B cell (primary cell): ENCODE measurements at regions of chr3 and their contacts with region 1.

Region 1: GRCh38 chr3:196609343-196609775 is 30.1 kb upstream of the NRROS start:
- DNase-seq: peak; percentile 93
- ATAC-seq: peak; percentile 92
- H3K4me3 ChIP-seq: peak overlapping the region in 2 of 5 experiments; percentile 5 to 11
- H3K4me3 Mint-ChIP-seq: peak overlapping the region; percentile 70
- H3K27ac ChIP-seq: peak overlapping the region in 1 of 2 donors; percentile 15
- H3K27ac Mint-ChIP-seq: peak overlapping the region; percentile 86
- H3K4me1 ChIP-seq: peaks cover 8 to 12% of the 10 kb centered on the region in 2 donors
- H3K4me1 Mint-ChIP-seq: peaks cover 15% of the 10 kb centered on the region
- H3K27me3 ChIP-seq: no peaks in the 10 kb centered on the region
- H3K27me3 Mint-ChIP-seq: no peaks in the 10 kb centered on the region
- CTCF ChIP-seq: peak; percentile 92

Region 2: GRCh38 chr3:196585044-196585757 is 24.2 kb before region 1 on chr3:
- CTCF ChIA-PET with region 1: interaction called, 11 read pairs
- POLR2A ChIA-PET with region 1: no interaction called
- intact Hi-C with region 1: no loop called
- DNase-seq: no peak
- ATAC-seq: no peak
- H3K4me3 ChIP-seq: no peak overlapping the region
- H3K4me3 Mint-ChIP-seq: no peak overlapping the region
- H3K27ac ChIP-seq: no peak overlapping the region
- H3K27ac Mint-ChIP-seq: no peak overlapping the region
- H3K4me1 ChIP-seq: no peaks in the 10 kb centered on the region
- H3K4me1 Mint-ChIP-seq: no peaks in the 10 kb centered on the region
- H3K27me3 ChIP-seq: no peaks in the 10 kb centered on the region
- H3K27me3 Mint-ChIP-seq: no peaks in the 10 kb centered on the region
- CTCF ChIP-seq: no peak

Region 3: DNA sequence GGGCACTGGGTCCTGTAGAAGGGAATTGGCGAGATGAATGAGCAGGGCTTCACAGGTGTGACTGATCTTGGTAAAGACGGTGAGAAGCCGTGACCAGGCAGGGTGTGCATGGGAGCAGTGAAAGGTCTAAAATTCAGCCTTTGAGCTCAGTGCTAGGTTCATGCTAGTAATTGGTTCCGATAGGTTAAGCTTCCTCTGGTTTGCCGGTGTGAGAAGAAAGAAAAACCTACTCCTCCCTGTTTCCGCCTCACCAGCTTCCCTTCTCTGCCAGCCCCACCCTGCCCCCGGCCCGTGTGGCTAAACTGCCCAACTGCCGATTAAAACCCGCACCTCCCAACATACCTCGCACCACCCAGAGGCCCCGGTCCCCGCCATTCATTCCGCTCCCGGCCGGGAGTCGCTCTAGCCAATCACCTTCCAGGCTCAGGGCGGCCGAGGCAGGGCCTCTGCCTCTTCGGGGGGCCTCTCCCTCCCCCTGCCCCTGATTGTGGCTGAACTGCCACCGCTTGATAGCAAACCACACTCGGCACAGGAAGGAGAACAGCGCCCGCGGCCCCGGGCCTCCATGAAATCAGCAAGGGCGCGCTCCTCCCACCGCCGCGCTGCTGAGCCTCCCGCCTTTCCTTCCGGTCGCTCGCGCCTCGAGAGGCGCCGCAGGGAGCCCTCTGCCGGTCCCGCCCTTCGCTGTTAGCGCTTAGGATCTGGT is 22.8 kb after region 1 on chr3:
- CTCF ChIA-PET with region 1: interaction called, 34 read pairs
- POLR2A ChIA-PET with region 1: no interaction called
- intact Hi-C with region 1: loop called (anchors 1 kb)
- DNase-seq: peak; percentile 90
- ATAC-seq: peak; percentile 82
- H3K4me3 ChIP-seq: peak overlapping the region; percentile 60 to 78 (median 70)
- H3K4me3 Mint-ChIP-seq: peak overlapping the region; percentile 92
- H3K27ac ChIP-seq: peak overlapping the region; percentile 94 to 97
- H3K27ac Mint-ChIP-seq: peak overlapping the region; percentile 96
- H3K4me1 ChIP-seq: peaks cover 29 to 49% of the 10 kb centered on the region in 2 donors
- H3K4me1 Mint-ChIP-seq: peaks cover 52% of the 10 kb centered on the region
- H3K27me3 ChIP-seq: no peaks in the 10 kb centered on the region
- H3K27me3 Mint-ChIP-seq: no peaks in the 10 kb centered on the region
- CTCF ChIP-seq: peak; percentile 29

Region 4: DNA sequence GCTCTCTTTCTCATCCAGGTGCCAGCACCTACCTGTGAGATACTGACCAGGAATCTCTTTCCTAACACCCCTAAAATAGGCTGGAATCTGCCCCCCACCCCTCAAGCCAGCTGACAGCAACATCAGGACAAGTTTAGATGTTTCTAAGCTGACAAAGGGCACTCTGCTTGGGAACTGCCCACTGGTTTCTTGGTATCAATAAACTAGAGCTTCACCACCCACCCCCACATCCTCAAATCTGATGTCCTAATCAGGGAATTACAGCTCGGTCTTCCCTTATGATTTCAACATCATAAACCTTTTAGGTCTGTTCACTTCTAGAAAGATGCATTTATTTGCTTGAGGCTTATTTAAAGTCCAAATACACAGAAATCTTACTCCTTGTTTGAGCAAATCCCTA is 68.0 kb after region 1 on chr3:
- CTCF ChIA-PET with region 1: interaction called, 12 read pairs
- POLR2A ChIA-PET with region 1: no interaction called
- intact Hi-C with region 1: no loop called
- DNase-seq: no peak
- ATAC-seq: no peak
- H3K4me3 ChIP-seq: no peak overlapping the region
- H3K4me3 Mint-ChIP-seq: no peak overlapping the region
- H3K27ac ChIP-seq: no peak overlapping the region
- H3K27ac Mint-ChIP-seq: no peak overlapping the region
- H3K4me1 ChIP-seq: peaks cover 5 to 15% of the 10 kb centered on the region in 2 donors
- H3K4me1 Mint-ChIP-seq: peaks cover 17% of the 10 kb centered on the region
- H3K27me3 ChIP-seq: no peaks in the 10 kb centered on the region
- H3K27me3 Mint-ChIP-seq: no peaks in the 10 kb centered on the region
- CTCF ChIP-seq: no peak

Region 5: DNA sequence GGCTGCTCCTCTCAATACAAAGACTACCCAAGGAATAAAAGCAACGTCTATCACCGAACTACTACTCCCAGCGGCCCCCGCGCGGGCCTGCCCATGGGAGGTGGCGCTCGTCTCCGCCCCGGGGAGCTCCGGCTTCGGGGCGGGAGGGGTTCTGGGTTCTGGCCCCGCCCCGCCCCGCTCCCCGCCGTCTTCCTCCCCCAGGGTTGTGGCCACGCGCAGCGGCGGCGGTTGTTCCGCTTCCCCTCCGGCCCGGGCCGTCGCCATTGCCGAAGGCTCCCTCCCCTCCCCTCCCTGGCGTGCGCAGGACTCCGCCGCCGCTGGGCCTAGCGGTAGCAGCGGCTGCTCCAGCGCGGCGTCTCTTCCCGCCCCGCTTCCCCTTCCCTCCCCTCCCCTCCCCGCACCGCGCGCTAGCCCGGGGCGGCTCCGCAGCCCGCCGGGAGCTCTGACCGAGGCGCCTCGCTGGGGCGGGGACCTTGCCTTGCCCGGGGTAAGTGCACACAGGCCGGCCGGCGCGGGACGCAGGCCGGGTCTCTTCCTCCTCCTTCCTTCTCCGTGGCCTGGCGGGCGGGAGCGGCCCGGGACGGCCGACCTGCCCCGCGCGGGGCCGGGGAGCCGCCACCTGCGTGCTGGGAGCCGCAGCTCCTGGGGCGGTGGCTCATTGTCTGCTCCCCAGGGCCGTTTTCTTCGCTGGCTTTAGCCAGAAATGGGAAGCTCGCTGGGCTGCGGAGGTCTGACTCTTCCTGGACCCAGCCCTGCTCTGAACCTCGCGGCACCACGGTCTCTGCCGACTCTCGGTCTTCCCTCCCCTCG is 130.5 kb after region 1 on chr3 and contains the start of gene PAK2:
- CTCF ChIA-PET with region 1: interaction called, 14 read pairs
- POLR2A ChIA-PET with region 1: no interaction called
- intact Hi-C with region 1: loop called (anchors 2 kb)
- DNase-seq: peak; percentile 94
- ATAC-seq: peak; percentile 92
- H3K4me3 ChIP-seq: peak within 1 kb of the TSS; percentile 45 to 97 (median 69)
- H3K4me3 Mint-ChIP-seq: peak within 1 kb of the TSS; percentile 100
- H3K27ac ChIP-seq: peak within 1 kb of the TSS; percentile 48 to 96
- H3K27ac Mint-ChIP-seq: peak within 1 kb of the TSS; percentile 98
- H3K4me1 ChIP-seq: peaks cover 21 to 26% of the 10 kb centered on the region in 2 donors
- H3K4me1 Mint-ChIP-seq: peaks cover 28% of the 10 kb centered on the region
- H3K27me3 ChIP-seq: no peaks in the 10 kb centered on the region
- H3K27me3 Mint-ChIP-seq: no peaks in the 10 kb centered on the region
- CTCF ChIP-seq: no peak
- total RNA-seq, gene PAK2: 81.7 and 97.7 TPM in 2 replicates